CD4-positive, alpha-beta T cell (primary cell): ENCODE measurements at regions of chr2 and their contacts with region 1.

Region 1: DNA sequence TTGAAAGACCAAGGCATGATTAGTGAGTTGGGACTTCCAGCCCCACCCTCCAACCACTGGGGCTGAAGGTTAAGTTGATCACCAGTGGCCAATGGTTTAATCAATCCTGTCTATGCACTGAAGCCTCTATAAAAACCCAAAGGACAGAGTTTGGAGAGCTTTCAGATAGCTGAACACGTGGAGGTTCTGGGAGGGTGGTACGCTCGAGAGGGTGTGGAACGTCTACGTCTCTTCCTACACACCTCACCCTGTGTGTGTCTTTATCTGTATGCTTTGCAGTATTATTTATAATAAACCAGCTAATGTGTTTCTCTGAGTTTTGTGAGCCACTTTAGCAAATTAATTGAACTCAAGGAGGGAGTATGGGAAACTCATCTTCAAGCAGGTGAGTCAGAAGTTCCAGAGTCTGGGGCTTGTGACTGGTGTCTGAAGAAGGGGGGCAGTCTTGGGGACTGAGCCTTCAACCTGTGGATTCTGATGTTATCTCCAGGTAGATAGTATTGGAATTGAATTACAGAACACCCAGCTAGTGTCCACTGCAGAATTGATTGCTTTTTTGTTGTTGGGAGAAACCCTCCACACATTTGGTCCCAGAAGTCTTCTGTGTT is 20.3 kb downstream of the ACTR3 start:
- DNase-seq: peak in 12 of 14 experiments; percentile 16 to 61 (median 44)
- ATAC-seq: peak; percentile 86
- H3K4me3 ChIP-seq: no peak overlapping the region
- H3K4me3 Mint-ChIP-seq: peak overlapping the region; percentile 60
- H3K27ac ChIP-seq: peak overlapping the region in 1 of 2 donors; percentile 2
- H3K27ac Mint-ChIP-seq: peak overlapping the region; percentile 84
- H3K4me1 ChIP-seq: peaks cover 22% of the 10 kb centered on the region
- H3K4me1 Mint-ChIP-seq: peaks cover 86% of the 10 kb centered on the region
- H3K27me3 ChIP-seq: no peaks in the 10 kb centered on the region
- H3K27me3 Mint-ChIP-seq: no peaks in the 10 kb centered on the region
- CTCF ChIP-seq: no peak

Region 2: DNA sequence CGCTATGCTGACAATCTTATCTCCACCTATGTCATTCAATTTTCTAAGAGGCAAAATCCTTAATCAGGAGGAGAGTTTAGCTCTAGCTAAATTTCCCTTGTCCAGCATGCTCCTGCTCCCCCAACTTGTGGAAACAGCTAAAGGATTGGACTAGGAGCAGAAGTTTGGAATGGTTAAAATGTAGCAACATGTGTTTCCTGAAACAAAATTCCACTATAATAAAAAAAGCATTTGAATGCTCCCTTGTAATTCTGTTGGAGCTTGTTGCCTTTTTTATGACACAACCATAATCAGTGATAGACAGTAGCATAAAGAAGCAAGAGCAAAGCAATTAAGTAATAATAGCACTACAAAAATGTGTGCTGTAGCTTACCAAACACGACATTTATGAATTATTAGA is 13.4 kb before region 1 on chr2:
- CTCF ChIA-PET with region 1: interaction called, 6 read pairs
- POLR2A ChIA-PET with region 1: interaction called, 10 read pairs
- intact Hi-C with region 1: loop called in 1 of 2 experiments (anchors 2 kb)
- DNase-seq: no peak
- ATAC-seq: no peak
- H3K4me3 ChIP-seq: no peak overlapping the region
- H3K4me3 Mint-ChIP-seq: peak overlapping the region; percentile 43
- H3K27ac ChIP-seq: no peak overlapping the region
- H3K27ac Mint-ChIP-seq: peak overlapping the region; percentile 94
- H3K4me1 ChIP-seq: peaks cover 40% of the 10 kb centered on the region
- H3K4me1 Mint-ChIP-seq: peaks cover 100% of the 10 kb centered on the region
- H3K27me3 ChIP-seq: no peaks in the 10 kb centered on the region
- H3K27me3 Mint-ChIP-seq: no peaks in the 10 kb centered on the region
- CTCF ChIP-seq: no peak

Region 3: DNA sequence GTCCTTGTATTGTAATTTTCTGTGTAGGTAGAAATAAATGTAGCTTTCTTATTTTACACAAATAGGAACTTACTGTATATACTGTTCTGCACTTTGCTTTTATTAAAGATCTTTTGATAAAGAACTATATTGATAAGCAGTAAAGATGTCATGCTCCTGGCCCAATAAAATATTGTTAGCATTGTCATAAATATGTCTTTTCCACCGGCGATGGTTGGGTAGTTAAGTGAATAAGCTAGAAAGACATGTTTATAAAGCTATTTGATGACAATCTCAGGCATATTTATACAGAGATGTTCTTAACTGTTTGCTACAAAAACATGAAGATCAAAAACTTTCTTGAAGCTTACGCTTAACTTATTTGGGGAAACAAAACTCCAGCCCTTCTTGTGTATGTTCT is 49.0 kb after region 1 on chr2:
- CTCF ChIA-PET with region 1: no interaction called
- POLR2A ChIA-PET with region 1: no interaction called
- intact Hi-C with region 1: loop called in 1 of 2 experiments (anchors 1 kb)
- DNase-seq: no peak
- ATAC-seq: no peak
- H3K4me3 ChIP-seq: no peak overlapping the region
- H3K4me3 Mint-ChIP-seq: no peak overlapping the region
- H3K27ac ChIP-seq: no peak overlapping the region
- H3K27ac Mint-ChIP-seq: no peak overlapping the region
- H3K4me1 ChIP-seq: no peaks in the 10 kb centered on the region
- H3K4me1 Mint-ChIP-seq: peaks cover 10% of the 10 kb centered on the region
- H3K27me3 ChIP-seq: no peaks in the 10 kb centered on the region
- H3K27me3 Mint-ChIP-seq: no peaks in the 10 kb centered on the region
- CTCF ChIP-seq: no peak